Activated CD4-positive, alpha-beta memory T cell treated with anti-CD3 and anti-CD28 coated beads for 36 hours (primary cell): ENCODE measurements at regions of chr10 and their contacts with region 1.

Region 1: GRCh38 chr10:24920907-24921881 is 31.2 kb downstream of the PRTFDC1 start:
- DNase-seq: peak; percentile 89
- H3K4me3 Mint-ChIP-seq: peak overlapping the region; percentile 22
- H3K27ac Mint-ChIP-seq: peak overlapping the region; percentile 78
- H3K4me1 Mint-ChIP-seq: peaks cover 21% of the 10 kb centered on the region
- H3K27me3 Mint-ChIP-seq: no peaks in the 10 kb centered on the region

Region 2: DNA sequence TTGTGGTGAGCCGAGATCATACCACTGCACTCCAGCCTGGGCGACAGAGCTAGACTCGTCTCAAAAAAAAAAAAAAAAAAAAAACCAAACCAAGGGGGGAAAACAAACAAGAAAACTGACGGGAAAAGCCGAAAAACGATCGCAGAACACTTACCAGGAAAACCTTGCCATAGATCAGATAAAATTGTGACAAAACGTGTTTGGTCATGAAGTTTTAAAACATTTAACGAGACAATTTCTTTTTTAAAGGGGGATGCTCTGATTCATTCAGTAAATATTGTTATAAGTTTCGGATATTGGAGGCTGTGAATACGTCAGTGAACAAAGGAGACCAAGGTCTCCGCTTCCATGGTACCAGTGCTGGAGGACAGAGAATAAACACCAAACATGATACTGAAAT is 1916.0 kb before region 1 on chr10:
- CTCF ChIA-PET with region 1: no interaction called
- POLR2A ChIA-PET with region 1: no interaction called
- intact Hi-C with region 1: no loop called
- DNase-seq: no peak
- H3K4me3 Mint-ChIP-seq: no peak overlapping the region
- H3K27ac Mint-ChIP-seq: no peak overlapping the region
- H3K4me1 Mint-ChIP-seq: no peaks in the 10 kb centered on the region
- H3K27me3 Mint-ChIP-seq: peaks cover 32% of the 10 kb centered on the region

Region 3: GRCh38 chr10:24822590-24822989 is 98.6 kb before region 1 on chr10:
- CTCF ChIA-PET with region 1: no interaction called
- POLR2A ChIA-PET with region 1: no interaction called
- intact Hi-C with region 1: loop called (anchors 2 kb)
- DNase-seq: peak; percentile 52
- H3K4me3 Mint-ChIP-seq: no peak overlapping the region
- H3K27ac Mint-ChIP-seq: no peak overlapping the region
- H3K4me1 Mint-ChIP-seq: peaks cover 36% of the 10 kb centered on the region
- H3K27me3 Mint-ChIP-seq: no peaks in the 10 kb centered on the region

Region 4: GRCh38 chr10:24887855-24888231 is 33.4 kb before region 1 on chr10:
- CTCF ChIA-PET with region 1: no interaction called
- POLR2A ChIA-PET with region 1: interaction called, 3 read pairs
- intact Hi-C with region 1: loop called (anchors 1 kb)
- DNase-seq: no peak
- H3K4me3 Mint-ChIP-seq: no peak overlapping the region
- H3K27ac Mint-ChIP-seq: peak overlapping the region; percentile 76
- H3K4me1 Mint-ChIP-seq: peaks cover 35% of the 10 kb centered on the region
- H3K27me3 Mint-ChIP-seq: no peaks in the 10 kb centered on the region

Region 5: DNA sequence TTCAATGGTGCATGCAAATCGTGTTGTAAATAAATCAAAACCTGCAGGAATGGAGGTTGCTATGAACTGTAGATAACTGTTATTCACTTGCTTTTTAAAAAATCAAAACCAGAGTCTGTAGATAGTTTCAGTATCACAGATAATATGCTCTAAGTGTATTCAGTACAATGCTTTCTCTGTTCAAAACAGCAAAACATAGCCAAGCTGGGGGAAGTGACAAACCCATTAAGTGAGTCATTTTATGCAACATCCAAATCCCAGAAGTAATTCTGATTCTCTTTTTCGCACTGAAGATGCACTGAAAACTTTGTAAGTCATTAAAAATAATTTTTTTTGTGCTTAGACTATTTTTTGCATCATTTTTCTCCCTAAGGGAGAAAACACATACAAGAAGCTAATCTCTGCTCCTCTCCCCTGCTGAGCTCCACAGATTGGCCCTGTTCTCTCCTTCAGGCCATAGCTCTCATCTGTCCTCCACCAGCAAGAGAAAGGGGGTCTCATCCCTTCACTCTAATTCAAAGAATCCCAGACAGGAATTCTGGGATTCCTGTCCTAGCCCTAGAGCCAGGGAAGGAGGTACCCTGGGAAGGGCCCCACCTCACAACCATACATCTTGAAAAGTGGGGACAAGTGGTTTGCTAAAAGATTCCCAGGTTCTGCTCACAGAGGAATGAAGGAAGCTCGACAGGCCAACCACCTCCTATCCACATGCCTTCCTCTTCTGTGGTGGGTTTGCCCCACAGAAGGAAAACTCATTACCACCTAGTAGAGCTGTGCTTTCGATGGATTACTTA is 26.3 kb after region 1 on chr10:
- CTCF ChIA-PET with region 1: interaction called, 3 read pairs
- POLR2A ChIA-PET with region 1: interaction called, 3 read pairs
- intact Hi-C with region 1: loop called (anchors 1 kb)
- DNase-seq: no peak
- H3K4me3 Mint-ChIP-seq: no peak overlapping the region
- H3K27ac Mint-ChIP-seq: no peak overlapping the region
- H3K4me1 Mint-ChIP-seq: peaks cover 29% of the 10 kb centered on the region
- H3K27me3 Mint-ChIP-seq: peaks cover 4% of the 10 kb centered on the region

Region 6: GRCh38 chr10:25059764-25060389 is 138.7 kb after region 1 on chr10:
- CTCF ChIA-PET with region 1: no interaction called
- POLR2A ChIA-PET with region 1: no interaction called
- intact Hi-C with region 1: loop called (anchors 1 kb)
- DNase-seq: no peak
- H3K4me3 Mint-ChIP-seq: no peak overlapping the region
- H3K27ac Mint-ChIP-seq: no peak overlapping the region
- H3K4me1 Mint-ChIP-seq: peaks cover 20% of the 10 kb centered on the region
- H3K27me3 Mint-ChIP-seq: no peaks in the 10 kb centered on the region